A673 (cell line): ENCODE measurements at regions of chr18 and their contacts with region 1.

Region 1: DNA sequence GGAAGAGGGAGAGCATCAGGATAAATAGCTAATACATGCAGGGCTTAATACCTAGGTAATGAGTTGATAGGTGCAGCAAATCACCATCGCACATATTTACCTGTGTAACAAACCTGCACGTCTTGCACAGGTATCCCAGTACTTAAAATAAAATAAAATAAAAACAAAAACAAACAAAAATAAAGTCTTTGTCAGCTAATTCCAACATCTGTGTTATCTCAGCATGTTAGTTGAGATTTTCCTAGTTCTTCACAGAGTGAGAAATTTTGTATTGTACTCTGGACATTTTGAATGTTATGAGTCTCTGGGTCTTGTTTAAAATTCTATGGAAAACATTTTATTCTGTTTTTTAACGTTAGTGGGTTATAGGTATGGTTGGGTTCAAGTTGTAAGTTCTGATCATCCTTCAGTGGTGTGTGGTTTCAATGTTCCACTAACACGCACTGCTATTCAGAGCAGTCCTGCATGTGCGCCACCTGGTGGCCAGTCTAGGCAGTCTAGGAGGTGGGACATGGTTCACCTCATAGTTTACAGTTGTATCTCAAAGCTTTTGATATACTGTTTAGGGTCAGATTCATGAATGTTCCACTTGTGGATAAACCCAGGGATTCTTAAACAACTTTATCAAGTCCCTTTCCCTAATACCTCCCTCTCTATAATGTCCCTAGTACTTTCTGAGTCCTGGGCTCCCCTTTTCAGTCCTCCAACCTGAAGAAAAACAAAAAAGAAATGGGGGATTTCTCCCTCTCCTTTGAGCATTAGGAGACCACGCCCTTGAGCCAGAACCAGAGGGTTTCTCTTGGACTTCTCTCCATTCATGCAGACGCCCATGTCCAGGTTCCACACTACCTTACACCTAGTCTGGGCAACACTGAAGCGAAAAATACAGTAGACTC is 213.4 kb upstream of the GATA6 start:
- DNase-seq: peak; percentile 77
- H3K4me3 ChIP-seq: no peak overlapping the region
- H3K27ac ChIP-seq: no peak overlapping the region
- H3K4me1 ChIP-seq: no peaks in the 10 kb centered on the region
- H3K27me3 ChIP-seq: peaks cover 21% of the 10 kb centered on the region
- CTCF ChIP-seq: peak; percentile 98

Region 2: GRCh38 chr18:21191596-21192307 is 764.3 kb before region 1 on chr18:
- CTCF ChIA-PET with region 1: no interaction called
- POLR2A ChIA-PET with region 1: no interaction called
- intact Hi-C with region 1: loop called (anchors 10 kb)
- DNase-seq: peak; percentile 72
- H3K4me3 ChIP-seq: no peak overlapping the region
- H3K27ac ChIP-seq: no peak overlapping the region
- H3K4me1 ChIP-seq: no peaks in the 10 kb centered on the region
- H3K27me3 ChIP-seq: peaks cover 3% of the 10 kb centered on the region
- CTCF ChIP-seq: peak; percentile 76

Region 3: GRCh38 chr18:21391074-21391673 is 564.8 kb before region 1 on chr18:
- CTCF ChIA-PET with region 1: no interaction called
- POLR2A ChIA-PET with region 1: interaction called, 23 read pairs
- intact Hi-C with region 1: no loop called
- DNase-seq: peak; percentile 11
- H3K4me3 ChIP-seq: no peak overlapping the region
- H3K27ac ChIP-seq: no peak overlapping the region
- H3K4me1 ChIP-seq: no peaks in the 10 kb centered on the region
- H3K27me3 ChIP-seq: no peaks in the 10 kb centered on the region
- CTCF ChIP-seq: no peak

Region 4: DNA sequence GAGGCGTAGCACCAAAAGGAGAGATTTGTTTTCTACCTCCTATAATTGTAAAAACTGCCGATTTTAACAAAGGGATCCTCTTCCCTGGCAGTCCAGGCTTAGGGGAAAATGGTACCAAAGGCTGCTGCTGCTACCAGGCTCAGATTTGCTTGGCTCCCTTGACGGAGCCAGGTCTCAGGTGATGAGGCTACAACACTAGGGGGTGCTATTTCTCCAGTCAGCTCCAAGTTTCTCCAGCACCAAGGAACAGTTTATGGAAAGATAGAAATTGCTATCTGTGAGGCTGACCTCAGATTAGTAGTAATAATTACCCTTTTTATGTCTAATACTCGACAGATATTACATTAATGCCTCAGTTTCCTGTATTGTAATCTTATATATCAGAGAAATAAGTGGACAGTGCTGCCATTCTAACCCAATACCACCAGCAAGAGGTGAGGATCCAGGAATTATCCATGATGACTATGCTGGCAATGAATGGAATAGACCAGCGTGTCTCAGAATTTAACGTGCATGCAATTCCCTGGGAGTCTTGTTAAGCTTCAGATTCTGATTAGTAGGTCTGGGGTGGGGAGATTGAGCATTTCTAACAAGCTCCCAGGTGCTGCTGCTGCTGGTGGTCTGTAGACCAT is 466.8 kb before region 1 on chr18:
- CTCF ChIA-PET with region 1: no interaction called
- POLR2A ChIA-PET with region 1: no interaction called
- intact Hi-C with region 1: loop called (anchors 1 kb)
- DNase-seq: peak; percentile 72
- H3K4me3 ChIP-seq: no peak overlapping the region
- H3K27ac ChIP-seq: no peak overlapping the region
- H3K4me1 ChIP-seq: peaks cover 9% of the 10 kb centered on the region
- H3K27me3 ChIP-seq: no peaks in the 10 kb centered on the region
- CTCF ChIP-seq: peak; percentile 91

Region 5: DNA sequence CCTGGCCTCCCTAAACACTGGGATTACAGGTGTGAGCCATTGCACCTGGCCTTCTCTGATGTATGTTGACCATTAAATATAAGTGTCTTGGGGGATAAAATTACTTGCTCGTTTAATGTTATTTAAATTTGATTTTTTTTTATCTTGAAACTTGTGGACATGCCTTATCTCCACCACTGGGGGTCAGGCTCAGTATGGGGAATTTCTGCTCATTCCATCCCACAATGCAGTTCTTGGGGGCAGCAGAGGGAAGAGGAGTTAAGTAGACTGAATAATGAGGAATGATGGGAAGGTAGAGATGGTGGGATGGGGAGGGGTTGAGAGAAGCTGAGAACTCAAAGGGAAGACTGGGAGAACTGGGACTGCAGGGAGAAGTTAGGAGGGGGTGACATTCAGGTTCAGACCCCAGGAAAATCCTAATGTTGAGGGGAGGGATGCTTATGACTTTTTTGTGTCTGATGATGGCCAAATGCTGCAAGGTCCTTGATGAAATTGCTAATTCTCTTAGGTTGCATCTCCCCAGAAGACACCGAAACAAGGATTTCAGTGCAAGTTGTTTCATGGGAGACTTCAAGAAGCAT is 41.2 kb before region 1 on chr18:
- CTCF ChIA-PET with region 1: no interaction called
- POLR2A ChIA-PET with region 1: no interaction called
- intact Hi-C with region 1: loop called (anchors 5 kb)
- DNase-seq: peak; percentile 74
- H3K4me3 ChIP-seq: no peak overlapping the region
- H3K27ac ChIP-seq: no peak overlapping the region
- H3K4me1 ChIP-seq: no peaks in the 10 kb centered on the region
- H3K27me3 ChIP-seq: peaks cover 19% of the 10 kb centered on the region
- CTCF ChIP-seq: peak; percentile 72

Region 6: GRCh38 chr18:21991081-21991581 is 35.1 kb after region 1 on chr18:
- CTCF ChIA-PET with region 1: no interaction called
- POLR2A ChIA-PET with region 1: no interaction called
- intact Hi-C with region 1: no loop called
- DNase-seq: no peak
- H3K4me3 ChIP-seq: no peak overlapping the region
- H3K27ac ChIP-seq: no peak overlapping the region
- H3K4me1 ChIP-seq: no peaks in the 10 kb centered on the region
- H3K27me3 ChIP-seq: no peaks in the 10 kb centered on the region
- CTCF ChIP-seq: no peak